Naive thymus-derived CD4-positive, alpha-beta T cell (primary cell): ENCODE measurements at regions of chr21 and their contacts with region 1.

Region 1: GRCh38 chr21:45140346-45140940 is 66.1 kb downstream of the ADARB1 start:
- DNase-seq: peak; percentile 32 to 62 (median 51)
- ATAC-seq: peak; percentile 95
- H3K4me3 ChIP-seq: no peak overlapping the region
- H3K4me3 Mint-ChIP-seq: no peak overlapping the region
- H3K27ac ChIP-seq: no peak overlapping the region
- H3K27ac Mint-ChIP-seq: no peak overlapping the region
- H3K4me1 ChIP-seq: no peaks in the 10 kb centered on the region
- H3K4me1 Mint-ChIP-seq: peaks cover 4 to 24% (median 17%) of the 10 kb centered on the region in 7 donors
- H3K27me3 ChIP-seq: no peaks in the 10 kb centered on the region
- H3K27me3 Mint-ChIP-seq: no peaks in the 10 kb centered on the region

Region 2: DNA sequence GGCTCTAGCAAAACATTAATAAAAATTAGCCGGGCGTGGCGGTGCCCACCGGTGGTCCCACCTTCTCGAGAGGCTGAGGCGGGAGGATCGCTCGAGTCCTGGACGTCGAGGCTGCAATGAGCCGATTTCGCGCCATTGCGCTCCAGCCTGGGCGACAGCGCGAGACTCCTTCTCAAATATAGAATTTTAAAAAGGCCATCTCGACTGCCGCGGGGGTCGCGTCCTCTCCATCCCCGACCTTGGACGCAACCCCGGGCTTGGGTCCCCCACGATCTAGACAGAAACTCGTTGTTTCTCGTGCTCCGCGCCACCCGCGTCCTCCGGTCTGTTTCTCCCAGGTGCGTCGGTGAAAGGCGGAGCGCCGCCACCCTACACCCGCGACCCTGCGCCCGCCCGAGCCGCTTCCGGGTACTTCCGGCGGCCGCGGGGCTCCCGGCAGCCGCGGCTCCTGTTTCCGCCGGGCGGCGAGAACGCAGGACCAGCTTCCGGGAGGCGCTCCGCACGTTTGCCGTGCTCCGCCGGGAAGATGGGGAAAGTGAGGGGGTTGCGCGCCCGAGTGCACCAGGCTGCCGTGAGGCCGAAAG is 200.8 kb before region 1 on chr21 and contains the start of gene SLX9:
- CTCF ChIA-PET with region 1: interaction called, 23 read pairs
- POLR2A ChIA-PET with region 1: no interaction called
- intact Hi-C with region 1: no loop called
- DNase-seq: peak; percentile 70 to 88 (median 79)
- ATAC-seq: peak; percentile 94
- H3K4me3 ChIP-seq: peak within 1 kb of the TSS; percentile 83
- H3K4me3 Mint-ChIP-seq: peak within 1 kb of the TSS; percentile 87 to 95 (median 91)
- H3K27ac ChIP-seq: peak within 1 kb of the TSS; percentile 80
- H3K27ac Mint-ChIP-seq: peak within 1 kb of the TSS; percentile 82 to 96 (median 87)
- H3K4me1 ChIP-seq: peaks cover 22 to 34% of the 10 kb centered on the region in 2 donors
- H3K4me1 Mint-ChIP-seq: peaks cover 30 to 55% (median 45%) of the 10 kb centered on the region in 7 donors
- H3K27me3 ChIP-seq: no peaks in the 10 kb centered on the region
- H3K27me3 Mint-ChIP-seq: no peaks in the 10 kb centered on the region
- total RNA-seq, gene SLX9: 17.8 to 46.4 (median 20.6) TPM

Region 3: DNA sequence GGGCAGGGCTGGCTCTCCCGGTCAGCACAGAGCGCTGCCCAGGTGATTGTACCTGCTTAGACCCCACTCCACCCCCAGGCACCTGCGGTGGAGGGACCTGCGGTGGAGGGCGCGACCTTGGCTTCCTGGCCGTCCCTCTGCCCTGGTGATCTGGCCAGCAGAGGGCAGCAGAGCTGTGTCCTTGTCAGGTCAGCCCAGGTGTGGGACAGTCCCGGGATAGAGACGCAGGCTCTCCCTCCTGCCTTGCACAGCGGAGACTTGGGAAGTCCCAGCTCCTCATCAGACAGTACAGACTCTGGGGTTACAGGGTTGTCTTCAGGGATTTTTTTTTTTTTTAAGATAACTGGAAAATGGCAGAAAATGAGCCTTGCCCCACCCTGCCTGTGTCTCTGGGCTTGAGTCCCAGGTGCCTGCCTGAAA is 190.7 kb before region 1 on chr21:
- CTCF ChIA-PET with region 1: interaction called, 63 read pairs
- POLR2A ChIA-PET with region 1: interaction called, 3 read pairs
- intact Hi-C with region 1: loop called (anchors 1 kb)
- DNase-seq: peak; percentile 57 to 85 (median 71)
- ATAC-seq: peak; percentile 92
- H3K4me3 ChIP-seq: no peak overlapping the region
- H3K4me3 Mint-ChIP-seq: peak overlapping the region in 1 of 10 donors; percentile 20
- H3K27ac ChIP-seq: no peak overlapping the region
- H3K27ac Mint-ChIP-seq: peak overlapping the region in 1 of 9 donors; percentile 48
- H3K4me1 ChIP-seq: peaks cover 6 to 8% of the 10 kb centered on the region in 2 donors
- H3K4me1 Mint-ChIP-seq: peaks cover 0 to 23% (median 16%) of the 10 kb centered on the region in 7 donors
- H3K27me3 ChIP-seq: no peaks in the 10 kb centered on the region
- H3K27me3 Mint-ChIP-seq: no peaks in the 10 kb centered on the region

Region 4: DNA sequence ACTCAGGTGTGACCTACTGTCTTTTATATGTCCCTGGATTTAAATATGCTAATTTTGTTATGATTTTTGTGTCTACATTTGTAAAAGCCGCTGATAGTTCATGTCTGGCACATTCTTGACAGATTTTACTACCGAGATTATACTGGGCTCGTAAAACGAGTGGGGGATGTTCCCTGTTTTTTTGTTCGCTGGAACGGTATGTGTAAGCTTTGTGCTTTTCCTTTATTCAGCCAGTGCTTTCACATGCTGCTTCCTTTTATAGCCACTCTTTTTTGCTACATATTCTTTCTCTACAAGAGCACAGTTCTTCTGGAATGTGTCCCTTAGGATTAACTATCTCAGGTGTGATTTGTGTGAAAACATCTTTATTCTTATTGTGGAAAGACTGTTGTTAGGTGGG is 19.5 kb before region 1 on chr21:
- CTCF ChIA-PET with region 1: interaction called, 44 read pairs
- POLR2A ChIA-PET with region 1: no interaction called
- intact Hi-C with region 1: no loop called
- DNase-seq: no peak
- ATAC-seq: no peak
- H3K4me3 ChIP-seq: no peak overlapping the region
- H3K4me3 Mint-ChIP-seq: no peak overlapping the region
- H3K27ac ChIP-seq: no peak overlapping the region
- H3K27ac Mint-ChIP-seq: peak overlapping the region in 2 of 9 donors; percentile 53 to 67
- H3K4me1 ChIP-seq: no peaks in the 10 kb centered on the region
- H3K4me1 Mint-ChIP-seq: peaks cover 16 to 59% (median 36%) of the 10 kb centered on the region in 7 donors
- H3K27me3 ChIP-seq: no peaks in the 10 kb centered on the region
- H3K27me3 Mint-ChIP-seq: no peaks in the 10 kb centered on the region

Region 5: GRCh38 chr21:45130324-45130774 is 10.1 kb before region 1 on chr21:
- CTCF ChIA-PET with region 1: interaction called, 44 read pairs
- POLR2A ChIA-PET with region 1: no interaction called
- intact Hi-C with region 1: no loop called
- DNase-seq: no peak
- ATAC-seq: no peak
- H3K4me3 ChIP-seq: no peak overlapping the region
- H3K4me3 Mint-ChIP-seq: no peak overlapping the region
- H3K27ac ChIP-seq: no peak overlapping the region
- H3K27ac Mint-ChIP-seq: peak overlapping the region in 1 of 9 donors; percentile 33
- H3K4me1 ChIP-seq: peaks cover 0 to 7% of the 10 kb centered on the region in 2 donors
- H3K4me1 Mint-ChIP-seq: peaks cover 18 to 34% (median 27%) of the 10 kb centered on the region in 7 donors
- H3K27me3 ChIP-seq: no peaks in the 10 kb centered on the region
- H3K27me3 Mint-ChIP-seq: no peaks in the 10 kb centered on the region

Region 6: DNA sequence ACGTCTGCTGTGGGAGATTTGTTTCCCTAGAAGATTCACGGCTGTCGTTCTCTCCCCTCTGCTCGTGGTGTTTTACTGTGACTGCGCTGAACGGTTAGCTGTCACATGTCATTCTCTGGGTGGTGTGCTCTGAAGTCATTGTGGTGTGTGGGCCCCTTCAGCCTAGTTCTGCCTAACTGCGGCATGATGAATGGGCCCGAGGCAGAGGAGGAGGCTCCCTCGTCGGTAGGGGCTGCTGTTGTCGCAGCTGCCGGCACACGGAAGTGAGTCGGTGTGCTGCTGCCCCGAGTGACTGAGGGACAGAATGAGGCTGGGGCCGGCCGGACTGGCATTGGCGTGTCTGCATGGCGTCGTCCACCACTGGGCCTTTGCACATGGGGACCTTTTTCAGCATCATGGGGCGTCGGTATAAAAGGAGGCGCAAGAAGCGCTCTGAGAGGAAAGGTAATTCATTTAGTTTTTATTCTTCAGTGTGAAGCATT is 11.9 kb after region 1 on chr21:
- CTCF ChIA-PET with region 1: interaction called, 13 read pairs
- POLR2A ChIA-PET with region 1: no interaction called
- intact Hi-C with region 1: loop called in 1 of 2 experiments (anchors 1 kb)
- DNase-seq: peak; percentile 47 to 75 (median 72)
- ATAC-seq: peak; percentile 95
- H3K4me3 ChIP-seq: no peak overlapping the region
- H3K4me3 Mint-ChIP-seq: peak overlapping the region; percentile 22 to 81 (median 72)
- H3K27ac ChIP-seq: peak overlapping the region; percentile 50
- H3K27ac Mint-ChIP-seq: peak overlapping the region; percentile 72 to 94 (median 85)
- H3K4me1 ChIP-seq: peaks cover 16 to 30% of the 10 kb centered on the region in 2 donors
- H3K4me1 Mint-ChIP-seq: peaks cover 23 to 55% (median 43%) of the 10 kb centered on the region in 7 donors
- H3K27me3 ChIP-seq: no peaks in the 10 kb centered on the region
- H3K27me3 Mint-ChIP-seq: no peaks in the 10 kb centered on the region

Region 7: DNA sequence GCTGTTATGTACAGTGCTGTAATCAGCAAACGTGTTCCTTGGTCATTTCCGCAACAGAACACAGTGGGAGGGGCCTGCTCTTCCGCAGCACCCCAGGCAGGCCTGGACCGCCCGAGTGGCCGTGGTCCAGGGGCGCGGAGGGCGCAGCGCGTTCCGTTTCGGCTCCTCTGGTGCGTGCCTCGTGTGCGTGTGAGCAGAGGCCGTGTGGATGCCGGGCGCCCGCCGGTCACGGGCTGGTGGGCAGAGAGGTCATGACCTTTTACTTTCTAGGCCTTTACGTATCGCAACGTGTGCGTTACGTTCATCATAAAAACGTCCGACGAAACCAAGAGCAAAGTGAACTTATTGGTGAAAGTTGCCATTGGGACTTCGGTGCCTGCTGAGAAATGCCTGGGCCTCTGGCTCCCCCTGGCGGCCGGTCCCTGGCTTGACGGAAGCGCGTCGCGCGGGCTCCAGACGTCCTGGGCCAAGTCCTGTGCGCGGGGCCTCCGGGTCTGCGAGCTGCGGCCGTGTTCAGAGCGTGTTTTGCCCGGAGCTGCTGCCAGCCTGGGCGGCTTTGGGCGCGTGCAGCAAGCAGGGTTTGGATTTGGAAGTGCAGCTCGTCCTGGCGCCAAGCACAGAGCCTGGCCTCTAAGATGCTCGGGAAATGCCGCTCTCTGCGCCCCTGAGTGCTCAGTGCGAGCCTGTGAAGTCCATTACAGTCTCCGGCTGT is 298.9 kb after region 1 on chr21:
- CTCF ChIA-PET with region 1: interaction called, 11 read pairs
- POLR2A ChIA-PET with region 1: no interaction called
- intact Hi-C with region 1: loop called (anchors 1 kb)
- DNase-seq: peak; percentile 72 to 91 (median 85)
- ATAC-seq: peak; percentile 90
- H3K4me3 ChIP-seq: peak overlapping the region; percentile 46
- H3K4me3 Mint-ChIP-seq: peak overlapping the region; percentile 66 to 82 (median 73)
- H3K27ac ChIP-seq: peak overlapping the region; percentile 66
- H3K27ac Mint-ChIP-seq: peak overlapping the region in 7 of 9 donors; percentile 25 to 92 (median 66)
- H3K4me1 ChIP-seq: peaks cover 4% of the 10 kb centered on the region in 2 donors
- H3K4me1 Mint-ChIP-seq: peaks cover 2 to 16% (median 6%) of the 10 kb centered on the region in 7 donors
- H3K27me3 ChIP-seq: no peaks in the 10 kb centered on the region
- H3K27me3 Mint-ChIP-seq: peaks cover 0 to 5% (median 0%) of the 10 kb centered on the region in 5 donors